ENCODE measurements at regions of chr4 and their contacts with region 1.

Region 1: GRCh38 chr4:56977321-56978012 is at the start of gene NOA1:
- DNase-seq: peak; percentile 98 to 99 (median 99)
- ATAC-seq: peak; percentile 86
- H3K4me3 ChIP-seq: peak within 1 kb of the TSS; percentile 80
- H3K4me3 Mint-ChIP-seq: peak within 1 kb of the TSS; percentile 92 to 100 (median 98)
- H3K27ac ChIP-seq: peak within 1 kb of the TSS; percentile 82
- H3K27ac Mint-ChIP-seq: peak within 1 kb of the TSS; percentile 94 to 100 (median 98)
- H3K4me1 ChIP-seq: peaks cover 36 to 38% of the 10 kb centered on the region in 2 donors
- H3K4me1 Mint-ChIP-seq: peaks cover 41 to 70% (median 52%) of the 10 kb centered on the region in 7 donors
- H3K27me3 ChIP-seq: no peaks in the 10 kb centered on the region
- H3K27me3 Mint-ChIP-seq: peaks cover 0 to 2% (median 0%) of the 10 kb centered on the region in 5 donors
- total RNA-seq, gene NOA1: 13.6 to 23.0 (median 20.9) TPM

Region 2: DNA sequence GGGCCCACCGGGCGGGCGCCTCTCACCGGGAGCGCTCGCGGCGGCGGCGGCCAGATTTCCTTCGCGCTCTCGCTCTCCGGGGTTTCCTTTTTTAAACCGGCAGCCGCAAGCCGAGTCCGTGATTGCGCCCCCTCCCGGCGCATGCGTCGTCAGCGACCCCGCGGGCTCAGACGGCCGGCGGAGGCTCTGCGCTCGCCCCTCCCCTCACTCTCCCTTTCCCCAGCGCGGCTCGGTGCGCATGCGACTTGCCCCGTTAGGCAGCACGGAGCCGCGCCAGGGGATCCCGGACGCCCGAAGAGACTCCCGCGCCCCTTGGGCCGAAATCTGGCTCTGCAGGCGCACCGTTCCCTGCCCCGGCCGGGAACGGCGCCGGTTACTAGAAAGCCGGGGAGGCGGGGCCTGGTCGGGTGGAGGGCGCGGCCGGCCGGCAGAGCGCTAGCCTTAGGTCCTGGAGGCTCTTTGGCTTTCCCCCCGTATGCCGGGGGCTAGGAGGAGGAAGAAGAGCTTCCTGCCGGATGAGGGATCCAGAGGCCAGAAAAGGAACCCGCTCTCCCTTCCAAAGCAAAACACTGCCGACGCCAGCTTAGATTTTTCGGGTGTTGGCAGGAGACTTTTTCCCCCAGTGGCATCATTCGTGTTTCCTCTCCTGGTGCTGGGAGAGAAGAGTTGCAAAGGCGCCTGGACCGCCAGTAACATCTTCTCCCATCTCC is 1430.6 kb before region 1 on chr4 and contains the start of gene CLOCK:
- CTCF ChIA-PET with region 1: no interaction called
- POLR2A ChIA-PET with region 1: no interaction called
- intact Hi-C with region 1: loop called (anchors 2 to 5 kb)
- DNase-seq: peak; percentile 79 to 87 (median 83)
- ATAC-seq: peak; percentile 82
- H3K4me3 ChIP-seq: peak within 1 kb of the TSS; percentile 82
- H3K4me3 Mint-ChIP-seq: peak within 1 kb of the TSS; percentile 88 to 96 (median 94)
- H3K27ac ChIP-seq: peak within 1 kb of the TSS; percentile 84
- H3K27ac Mint-ChIP-seq: peak within 1 kb of the TSS; percentile 87 to 92 (median 90)
- H3K4me1 ChIP-seq: peaks cover 5 to 8% of the 10 kb centered on the region in 2 donors
- H3K4me1 Mint-ChIP-seq: peaks cover 21 to 57% (median 40%) of the 10 kb centered on the region in 7 donors
- H3K27me3 ChIP-seq: no peaks in the 10 kb centered on the region
- H3K27me3 Mint-ChIP-seq: peaks cover 0 to 29% (median 0%) of the 10 kb centered on the region in 5 donors
- total RNA-seq, gene CLOCK: 7.9 to 12.6 (median 8.9) TPM

Region 3: DNA sequence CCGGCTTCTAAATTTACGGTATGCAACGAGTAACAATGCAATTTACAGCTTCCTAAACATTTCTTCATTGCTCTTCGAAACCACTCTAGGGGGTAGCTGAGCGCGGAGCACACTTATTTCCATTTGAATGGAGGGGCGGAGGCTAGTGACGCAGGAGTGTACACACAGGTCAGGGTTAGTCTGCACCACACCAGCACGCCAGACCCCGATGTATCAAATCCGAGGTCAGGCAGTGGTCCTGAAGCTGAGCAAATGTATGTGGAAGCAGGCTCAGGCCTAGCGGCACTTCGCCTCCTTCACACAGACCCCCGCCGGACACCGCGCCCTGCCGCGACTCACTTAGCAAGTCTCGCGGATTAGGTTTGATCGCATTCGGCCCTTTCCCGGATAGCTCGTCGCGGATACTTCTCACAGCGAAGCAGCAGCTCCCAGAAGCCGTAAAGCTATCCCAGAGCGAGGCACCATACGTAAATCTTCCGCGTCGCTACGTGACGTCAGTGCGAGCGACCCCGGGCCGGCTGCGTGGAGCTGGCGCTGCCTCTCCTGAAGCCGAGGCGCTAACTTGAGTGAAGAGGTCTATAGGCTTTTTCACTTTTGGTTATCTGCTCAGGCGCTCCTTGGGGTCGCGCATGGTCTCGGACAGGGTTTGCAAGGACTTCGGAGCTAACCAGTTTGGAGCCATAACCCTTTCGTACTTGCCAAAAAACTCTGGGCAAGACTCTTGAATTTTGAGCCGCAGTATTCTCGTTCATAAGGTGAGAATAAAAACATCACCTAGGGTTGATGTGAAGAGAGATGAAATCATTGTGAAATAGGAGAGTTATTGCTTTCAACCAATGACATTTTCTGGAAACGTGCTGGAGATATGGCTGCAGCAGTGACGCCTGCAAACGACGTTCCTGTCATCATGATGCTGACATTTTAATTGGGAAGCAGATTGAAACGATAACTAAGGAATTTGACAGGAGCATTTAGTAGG is 590.2 kb before region 1 on chr4 and contains the start of gene AASDH:
- CTCF ChIA-PET with region 1: interaction called, 4 read pairs
- POLR2A ChIA-PET with region 1: interaction called, 20 read pairs
- intact Hi-C with region 1: loop called (anchors 1 kb)
- DNase-seq: peak; percentile 92 to 98 (median 94)
- ATAC-seq: peak; percentile 95
- H3K4me3 ChIP-seq: peak within 1 kb of the TSS; percentile 94
- H3K4me3 Mint-ChIP-seq: peak within 1 kb of the TSS; percentile 87 to 99 (median 96)
- H3K27ac ChIP-seq: peak within 1 kb of the TSS; percentile 92
- H3K27ac Mint-ChIP-seq: peak within 1 kb of the TSS; percentile 97 to 100 (median 98)
- H3K4me1 ChIP-seq: peaks cover 15 to 18% of the 10 kb centered on the region in 2 donors
- H3K4me1 Mint-ChIP-seq: peaks cover 19 to 60% (median 47%) of the 10 kb centered on the region in 7 donors
- H3K27me3 ChIP-seq: no peaks in the 10 kb centered on the region
- H3K27me3 Mint-ChIP-seq: no peaks in the 10 kb centered on the region
- total RNA-seq, gene AASDH: 10.2 to 24.7 (median 15.8) TPM

Region 4: DNA sequence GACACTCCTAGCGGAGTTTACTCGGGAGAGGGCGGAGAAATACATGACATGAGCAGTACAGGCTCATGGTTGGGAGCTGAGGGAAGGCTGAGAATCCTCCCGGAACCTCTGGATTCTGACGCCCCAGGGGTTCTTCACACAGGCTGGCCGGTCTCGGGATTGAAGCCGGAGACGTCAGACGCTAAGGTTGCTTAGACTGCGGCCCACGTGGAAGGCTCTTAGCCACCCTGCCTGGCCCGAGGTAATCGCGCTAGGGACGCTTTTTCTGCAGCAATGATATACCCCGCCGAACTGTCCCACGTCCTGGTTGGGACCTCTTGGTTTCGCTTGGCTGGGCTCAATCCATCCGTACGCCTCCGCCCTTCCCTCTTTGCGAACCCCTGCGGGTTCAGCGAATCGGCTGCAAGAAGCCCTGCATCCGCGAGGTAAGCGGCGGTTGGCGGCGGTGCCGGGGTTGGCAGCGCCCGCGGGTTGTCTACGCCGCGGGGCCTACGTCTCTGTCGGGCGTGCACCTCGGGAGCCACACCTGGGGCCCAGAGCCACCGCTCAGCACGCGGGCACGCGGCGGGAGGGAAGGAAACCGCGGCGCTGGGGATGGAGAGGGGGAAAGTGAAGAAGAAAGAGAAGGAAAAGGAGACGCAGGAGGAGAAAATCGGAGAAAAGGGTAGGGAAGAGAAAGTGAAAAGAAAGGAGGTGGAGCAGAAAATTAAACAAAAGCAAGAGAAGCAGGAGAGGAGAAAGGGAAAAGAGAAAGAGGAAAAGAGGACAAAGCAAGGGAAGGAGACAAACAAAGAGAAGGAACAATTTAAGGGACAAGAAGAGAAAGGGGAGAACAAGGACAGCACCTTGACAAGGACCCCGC is 472.0 kb before region 1 on chr4 and contains the start of gene ARL9:
- CTCF ChIA-PET with region 1: no interaction called
- POLR2A ChIA-PET with region 1: no interaction called
- intact Hi-C with region 1: loop called in 1 of 2 experiments (anchors 1 kb)
- DNase-seq: peak; percentile 49 to 77 (median 68)
- ATAC-seq: peak; percentile 96
- H3K4me3 ChIP-seq: peak within 1 kb of the TSS; percentile 67
- H3K4me3 Mint-ChIP-seq: peak within 1 kb of the TSS; percentile 66 to 96 (median 88)
- H3K27ac ChIP-seq: peak within 1 kb of the TSS; percentile 44
- H3K27ac Mint-ChIP-seq: peak within 1 kb of the TSS in 8 of 9 donors; percentile 49 to 88 (median 72)
- H3K4me1 ChIP-seq: peaks cover 7 to 8% of the 10 kb centered on the region in 2 donors
- H3K4me1 Mint-ChIP-seq: peaks cover 13 to 20% (median 17%) of the 10 kb centered on the region in 7 donors
- H3K27me3 ChIP-seq: no peaks in the 10 kb centered on the region
- H3K27me3 Mint-ChIP-seq: peaks cover 0 to 12% (median 0%) of the 10 kb centered on the region in 5 donors
- total RNA-seq, gene ARL9: 0.19 to 0.43 TPM in 2 of 5 experiments, not detected in the others

Region 5: DNA sequence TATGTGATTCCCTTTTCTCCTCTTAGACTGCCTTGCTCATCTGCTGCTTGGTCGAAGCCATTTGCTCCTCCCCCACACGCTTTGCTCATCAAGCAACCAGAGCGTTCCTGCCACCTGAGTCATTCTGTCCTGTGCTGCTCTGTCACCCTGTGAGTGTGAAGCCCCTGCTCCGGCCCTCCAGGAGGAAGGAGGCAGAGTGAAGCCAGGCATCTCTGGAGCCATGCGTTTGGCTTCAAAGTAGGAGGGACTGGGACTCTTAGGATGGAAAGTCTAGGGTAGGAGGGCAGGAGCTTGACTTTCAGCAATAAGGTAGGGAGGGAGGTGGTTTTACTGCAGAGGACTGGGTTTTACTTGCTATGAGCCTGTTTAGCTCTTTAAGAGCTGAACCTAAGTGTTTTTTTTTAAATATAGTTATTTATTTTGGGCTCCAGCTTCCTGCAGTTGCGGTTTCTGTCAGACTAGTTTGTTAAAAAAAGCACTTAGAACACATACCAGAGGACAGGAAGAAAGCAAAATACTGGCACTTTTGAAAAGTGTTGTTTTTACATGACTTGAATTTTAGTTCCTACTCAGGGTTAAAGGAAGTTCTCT is 219.6 kb before region 1 on chr4:
- CTCF ChIA-PET with region 1: no interaction called
- POLR2A ChIA-PET with region 1: no interaction called
- intact Hi-C with region 1: loop called in 1 of 2 experiments (anchors 5 kb)
- DNase-seq: peak; percentile 12 to 85 (median 68)
- ATAC-seq: peak; percentile 88
- H3K4me3 ChIP-seq: peak overlapping the region; percentile 46
- H3K4me3 Mint-ChIP-seq: peak overlapping the region; percentile 71 to 91 (median 85)
- H3K27ac ChIP-seq: peak overlapping the region; percentile 65
- H3K27ac Mint-ChIP-seq: peak overlapping the region; percentile 76 to 99 (median 92)
- H3K4me1 ChIP-seq: peaks cover 28 to 29% of the 10 kb centered on the region in 2 donors
- H3K4me1 Mint-ChIP-seq: peaks cover 39 to 76% (median 57%) of the 10 kb centered on the region in 7 donors
- H3K27me3 ChIP-seq: no peaks in the 10 kb centered on the region
- H3K27me3 Mint-ChIP-seq: peaks cover 0 to 14% (median 0%) of the 10 kb centered on the region in 5 donors

Region 6: DNA sequence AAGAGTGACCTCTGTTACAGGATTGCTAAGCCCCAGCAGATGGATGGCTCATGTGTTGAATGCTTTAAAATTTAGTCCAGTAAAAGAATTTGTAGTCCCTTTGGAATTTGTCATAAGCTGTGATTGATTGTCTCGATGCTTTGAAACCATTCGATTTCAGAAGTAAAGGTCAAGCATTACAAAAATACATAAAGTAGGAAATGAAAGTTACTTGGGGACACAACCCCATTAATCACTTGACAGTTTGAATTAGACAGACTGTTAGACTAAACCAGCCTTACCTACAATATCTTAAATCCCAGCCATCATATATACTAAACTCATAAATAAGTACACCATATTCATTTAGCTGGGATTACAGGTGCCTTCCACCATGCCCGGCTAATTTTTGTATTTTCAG is 63.1 kb before region 1 on chr4:
- CTCF ChIA-PET with region 1: interaction called, 12 read pairs
- POLR2A ChIA-PET with region 1: interaction called, 142 read pairs
- intact Hi-C with region 1: no loop called
- DNase-seq: no peak
- ATAC-seq: no peak
- H3K4me3 ChIP-seq: no peak overlapping the region
- H3K4me3 Mint-ChIP-seq: peak overlapping the region in 8 of 10 donors; percentile 1 to 67 (median 43)
- H3K27ac ChIP-seq: no peak overlapping the region
- H3K27ac Mint-ChIP-seq: peak overlapping the region in 6 of 9 donors; percentile 15 to 73 (median 59)
- H3K4me1 ChIP-seq: peaks cover 42 to 61% of the 10 kb centered on the region in 2 donors
- H3K4me1 Mint-ChIP-seq: peaks cover 40 to 80% (median 70%) of the 10 kb centered on the region in 7 donors
- H3K27me3 ChIP-seq: no peaks in the 10 kb centered on the region
- H3K27me3 Mint-ChIP-seq: no peaks in the 10 kb centered on the region

Region 7: DNA sequence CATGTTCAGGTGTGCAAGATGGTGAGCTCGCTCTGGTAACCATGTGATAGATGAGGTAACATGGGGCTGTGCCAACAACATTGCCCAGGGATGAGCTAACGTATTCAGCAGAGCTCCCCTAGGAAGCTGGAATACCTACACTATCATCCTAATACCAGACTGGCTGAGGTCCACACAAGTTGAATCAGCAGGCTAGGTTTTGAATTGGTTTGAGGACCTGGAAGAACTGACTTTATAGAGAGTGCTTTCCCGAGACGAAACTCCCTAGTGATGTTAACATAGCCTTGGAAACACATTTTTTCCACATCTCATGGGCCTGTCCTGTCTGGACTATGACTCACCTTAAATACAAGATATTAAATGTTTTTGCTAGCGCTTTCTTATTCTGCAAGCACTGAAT is 76.0 kb after region 1 on chr4:
- CTCF ChIA-PET with region 1: no interaction called
- POLR2A ChIA-PET with region 1: no interaction called
- intact Hi-C with region 1: no loop called
- DNase-seq: no peak
- ATAC-seq: no peak
- H3K4me3 ChIP-seq: no peak overlapping the region
- H3K4me3 Mint-ChIP-seq: no peak overlapping the region
- H3K27ac ChIP-seq: no peak overlapping the region
- H3K27ac Mint-ChIP-seq: no peak overlapping the region
- H3K4me1 ChIP-seq: no peaks in the 10 kb centered on the region
- H3K4me1 Mint-ChIP-seq: peaks cover 0 to 3% (median 0%) of the 10 kb centered on the region in 7 donors
- H3K27me3 ChIP-seq: no peaks in the 10 kb centered on the region
- H3K27me3 Mint-ChIP-seq: peaks cover 10 to 35% (median 29%) of the 10 kb centered on the region in 5 donors

Region 8: DNA sequence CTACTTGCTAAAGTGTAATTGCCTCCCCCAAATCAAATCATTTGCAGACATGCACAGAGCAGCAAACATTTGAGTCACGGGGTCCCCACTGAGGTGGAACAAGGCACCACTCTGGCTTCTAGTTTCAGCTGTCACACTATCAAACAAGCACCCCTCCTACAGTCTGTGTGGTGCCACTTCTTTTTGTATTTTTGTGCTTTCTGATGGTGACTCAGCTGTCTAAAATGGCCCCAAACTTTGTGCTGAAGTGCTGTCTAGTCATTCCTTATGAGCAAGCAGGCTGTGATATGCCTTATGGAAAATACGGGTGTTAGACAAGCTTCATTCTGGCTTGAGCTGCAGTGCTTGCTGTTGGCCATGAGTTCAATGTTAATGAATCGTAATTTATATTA is 117.4 kb after region 1 on chr4:
- CTCF ChIA-PET with region 1: no interaction called
- POLR2A ChIA-PET with region 1: no interaction called
- intact Hi-C with region 1: no loop called
- DNase-seq: no peak
- ATAC-seq: no peak
- H3K4me3 ChIP-seq: no peak overlapping the region
- H3K4me3 Mint-ChIP-seq: no peak overlapping the region
- H3K27ac ChIP-seq: no peak overlapping the region
- H3K27ac Mint-ChIP-seq: no peak overlapping the region
- H3K4me1 ChIP-seq: no peaks in the 10 kb centered on the region
- H3K4me1 Mint-ChIP-seq: peaks cover 0 to 11% (median 0%) of the 10 kb centered on the region in 7 donors
- H3K27me3 ChIP-seq: no peaks in the 10 kb centered on the region
- H3K27me3 Mint-ChIP-seq: peaks cover 5 to 41% (median 17%) of the 10 kb centered on the region in 5 donors